ENCODE measurements at regions of chr4 and their contacts with region 1.

Region 1: DNA sequence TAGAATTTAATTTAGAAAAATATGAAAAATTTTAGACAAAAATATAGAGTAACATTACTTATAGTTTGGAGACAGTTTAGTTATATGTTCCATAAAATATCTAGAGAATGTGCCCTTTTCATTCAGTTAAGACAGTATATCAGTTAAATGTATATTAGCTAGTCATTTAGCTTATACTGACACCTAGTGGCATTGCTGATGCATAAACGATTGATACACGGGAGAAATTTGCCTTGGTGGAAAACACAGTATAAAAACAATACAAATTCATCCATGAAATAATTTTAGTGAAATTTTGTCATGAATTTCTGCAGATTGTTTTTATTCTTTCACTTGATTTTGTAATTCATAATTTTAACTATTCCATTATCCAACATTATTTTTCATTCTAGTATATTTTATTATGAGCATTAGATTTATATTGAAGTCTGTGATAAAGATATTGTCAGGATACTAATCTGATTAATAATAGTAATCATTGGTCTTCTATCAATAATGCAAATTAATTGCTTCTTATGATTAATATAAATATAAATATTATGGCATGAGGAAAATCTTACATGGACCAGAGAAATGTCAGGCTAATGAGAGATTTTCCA is 219.0 kb downstream of the TLL1 start:
- DNase-seq: no peak
- H3K4me3 Mint-ChIP-seq: no peak overlapping the region
- H3K27ac Mint-ChIP-seq: no peak overlapping the region
- H3K4me1 Mint-ChIP-seq: no peaks in the 10 kb centered on the region
- H3K27me3 Mint-ChIP-seq: no peaks in the 10 kb centered on the region

Region 2: DNA sequence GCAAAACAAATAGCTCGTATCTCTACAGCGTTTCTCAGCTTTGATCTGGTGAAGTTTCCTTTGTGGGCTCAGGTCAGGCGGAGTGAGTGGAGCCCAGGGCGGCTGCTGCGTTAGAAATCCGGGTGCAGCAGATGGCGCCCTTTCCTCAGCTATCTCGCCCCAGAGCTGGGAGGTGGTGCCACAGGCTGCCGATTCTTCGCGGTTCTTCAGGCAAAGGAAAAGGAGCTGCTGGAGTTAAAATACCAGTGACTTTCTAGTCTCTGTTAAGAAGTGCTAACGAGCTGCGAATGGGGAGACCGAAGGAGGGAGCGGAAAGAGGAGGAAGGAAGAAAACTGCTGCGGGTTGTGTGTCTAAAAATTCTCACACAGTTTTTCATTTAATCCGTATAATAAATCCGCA is 598.7 kb before region 1 on chr4:
- intact Hi-C with region 1: loop called (anchors 1 kb)
- DNase-seq: peak; percentile 88
- H3K4me3 Mint-ChIP-seq: peak overlapping the region; percentile 52
- H3K27ac Mint-ChIP-seq: no peak overlapping the region
- H3K4me1 Mint-ChIP-seq: peaks cover 3% of the 10 kb centered on the region
- H3K27me3 Mint-ChIP-seq: peaks cover 20% of the 10 kb centered on the region

Region 3: DNA sequence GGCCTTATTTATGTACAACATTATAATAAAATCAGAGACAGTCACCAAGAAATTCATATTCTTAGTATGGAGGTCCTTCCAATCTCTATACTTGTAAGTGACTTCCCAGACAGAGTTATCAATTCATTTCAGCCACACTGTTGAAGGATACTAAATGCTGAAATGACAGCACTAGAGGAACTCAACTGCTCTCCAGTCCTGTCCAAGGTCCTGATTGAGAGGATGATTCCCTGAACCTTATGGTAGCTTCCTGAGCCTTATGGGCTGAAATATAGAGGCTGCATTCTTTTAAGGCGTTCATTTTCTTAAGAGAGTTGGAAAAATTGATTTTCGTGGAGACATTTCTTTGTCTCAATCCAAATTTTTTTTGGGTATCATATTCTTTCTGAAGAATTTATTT is 13.1 kb before region 1 on chr4:
- intact Hi-C with region 1: no loop called
- DNase-seq: no peak
- H3K4me3 Mint-ChIP-seq: no peak overlapping the region
- H3K27ac Mint-ChIP-seq: no peak overlapping the region
- H3K4me1 Mint-ChIP-seq: no peaks in the 10 kb centered on the region
- H3K27me3 Mint-ChIP-seq: no peaks in the 10 kb centered on the region